IMR-90 (cell line): ENCODE measurements at regions of chr2 and their contacts with region 1.

Region 1: DNA sequence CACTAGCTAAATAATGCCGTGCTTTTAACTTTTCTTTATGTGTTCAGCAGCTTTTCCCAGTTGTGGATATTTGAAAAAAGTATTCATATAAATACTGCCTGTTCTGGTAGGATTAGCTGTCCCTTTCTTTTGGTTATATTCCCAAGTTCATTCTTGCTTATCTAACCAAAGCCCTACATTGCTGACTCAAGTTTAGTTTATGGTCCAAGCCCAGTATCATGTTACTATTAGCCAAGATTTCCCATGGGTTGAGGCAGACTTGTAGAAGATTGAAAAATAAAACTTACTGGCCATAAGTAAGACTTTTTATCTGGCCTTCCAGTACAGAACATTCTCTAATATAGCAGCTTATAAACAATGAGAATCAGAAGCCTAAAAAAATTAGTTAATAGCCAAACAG is 49.7 kb upstream of the NFE2L2 start:
- DNase-seq: peak; percentile 95
- ATAC-seq: peak; percentile 92
- H3K4me3 ChIP-seq: no peak overlapping the region
- H3K27ac ChIP-seq: peak overlapping the region; percentile 96; the same call in 1 of the 2 replicates
- H3K4me1 ChIP-seq: peaks cover 7% of the 10 kb centered on the region
- H3K27me3 ChIP-seq: no peaks in the 10 kb centered on the region
- CTCF ChIP-seq: no peak
- POLR2A ChIP-seq: no peak
- RAD21 ChIP-seq: no peak

Region 2: GRCh38 chr2:177275041-177276020 is 38.9 kb before region 1 on chr2:
- CTCF ChIA-PET with region 1: no interaction called
- POLR2A ChIA-PET with region 1: no interaction called
- dilution Hi-C with region 1: no loop called
- in situ Hi-C with region 1: no loop called
- intact Hi-C with region 1: loop called (anchors 5 kb)
- DNase-seq: peak; percentile 94
- ATAC-seq: peak; percentile 89
- H3K4me3 ChIP-seq: no peak overlapping the region
- H3K27ac ChIP-seq: peak overlapping the region; percentile 97
- H3K4me1 ChIP-seq: peaks cover 5% of the 10 kb centered on the region
- H3K27me3 ChIP-seq: no peaks in the 10 kb centered on the region
- CTCF ChIP-seq: no peak
- POLR2A ChIP-seq: no peak
- RAD21 ChIP-seq: no peak

Region 3: DNA sequence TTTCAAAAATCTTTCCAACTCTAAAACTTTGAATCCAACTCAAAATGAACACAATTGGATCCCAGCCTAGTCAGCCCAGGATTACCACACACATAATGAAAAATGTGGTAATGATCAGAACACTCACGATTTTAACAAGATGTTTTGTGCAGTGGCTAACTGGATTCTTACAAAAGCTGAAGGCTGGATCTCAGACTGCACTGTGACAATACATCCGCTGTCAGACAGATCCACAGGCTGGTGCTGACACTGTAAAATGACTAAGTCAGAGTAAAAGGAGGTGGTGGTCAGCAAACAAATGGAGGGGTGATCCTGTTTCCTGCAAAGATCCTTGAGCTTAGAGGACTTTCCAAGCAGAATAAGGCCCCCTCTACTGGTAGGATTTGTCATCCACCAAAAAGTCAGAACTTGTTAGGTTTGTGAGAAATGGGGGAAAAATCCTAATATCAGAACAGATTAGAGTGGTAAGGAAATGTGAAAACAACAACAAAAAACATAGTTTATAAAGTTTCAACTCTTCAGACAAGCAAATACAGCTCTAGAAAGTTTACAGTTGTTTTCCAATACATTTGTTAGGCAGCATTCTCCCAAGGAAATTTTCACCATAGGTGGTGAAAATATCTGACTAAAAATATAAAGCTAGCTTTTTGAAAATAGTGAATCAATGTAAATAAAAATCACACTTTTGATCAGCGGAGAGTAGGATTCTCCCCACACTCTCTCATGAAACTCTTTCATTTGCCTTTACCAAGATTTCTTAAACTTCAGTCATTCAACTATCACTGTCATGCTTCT is 290.3 kb after region 1 on chr2:
- CTCF ChIA-PET with region 1: no interaction called
- POLR2A ChIA-PET with region 1: no interaction called
- dilution Hi-C with region 1: no loop called
- in situ Hi-C with region 1: no loop called
- intact Hi-C with region 1: no loop called
- DNase-seq: peak; percentile 71
- ATAC-seq: peak; percentile 91
- H3K4me3 ChIP-seq: no peak overlapping the region
- H3K27ac ChIP-seq: no peak overlapping the region; the same call in 1 of the 2 replicates
- H3K4me1 ChIP-seq: peaks cover 2% of the 10 kb centered on the region
- H3K27me3 ChIP-seq: peaks cover 4% of the 10 kb centered on the region; the same call in 1 of the 2 replicates
- CTCF ChIP-seq: peak; percentile 72
- POLR2A ChIP-seq: no peak
- RAD21 ChIP-seq: peak; percentile 63